Breast epithelium (tissue), 4 donors: ENCODE measurements at regions of chr5 and their contacts with region 1.

Region 1: DNA sequence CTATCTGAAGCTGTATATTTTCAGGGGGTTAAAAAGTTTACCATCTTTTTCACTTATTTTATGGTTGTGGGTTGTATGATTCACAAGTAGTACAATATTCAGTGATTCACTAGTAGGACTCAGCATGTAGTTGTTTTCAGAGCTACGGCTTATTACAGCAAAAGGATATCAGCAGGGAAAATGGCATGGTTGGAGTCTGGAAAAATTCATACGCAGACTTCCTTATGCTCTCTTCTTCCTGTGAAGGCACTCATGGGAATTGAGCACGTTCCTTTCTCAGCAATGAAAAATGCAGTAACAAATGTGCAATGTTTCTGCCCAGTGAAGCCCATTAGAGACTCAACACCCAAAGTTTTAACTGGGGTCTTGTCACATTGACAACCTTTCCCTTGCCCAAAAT is 250.5 kb downstream of the KCNN2 start:
- DNase-seq: no peak
- H3K4me3 ChIP-seq: no peak overlapping the region
- H3K27ac ChIP-seq: no peak overlapping the region
- H3K4me1 ChIP-seq: no peaks in the 10 kb centered on the region
- H3K27me3 ChIP-seq: no peaks in the 10 kb centered on the region
- CTCF ChIP-seq: no peak
- POLR2A ChIP-seq: no peak

Region 2: GRCh38 chr5:114658194-114658593 is 45.8 kb after region 1 on chr5:
- intact Hi-C with region 1: no loop called
- DNase-seq: no peak
- H3K4me3 ChIP-seq: no peak overlapping the region
- H3K27ac ChIP-seq: no peak overlapping the region
- H3K4me1 ChIP-seq: no peaks in the 10 kb centered on the region
- H3K27me3 ChIP-seq: no peaks in the 10 kb centered on the region
- CTCF ChIP-seq: no peak
- POLR2A ChIP-seq: no peak

Region 3: DNA sequence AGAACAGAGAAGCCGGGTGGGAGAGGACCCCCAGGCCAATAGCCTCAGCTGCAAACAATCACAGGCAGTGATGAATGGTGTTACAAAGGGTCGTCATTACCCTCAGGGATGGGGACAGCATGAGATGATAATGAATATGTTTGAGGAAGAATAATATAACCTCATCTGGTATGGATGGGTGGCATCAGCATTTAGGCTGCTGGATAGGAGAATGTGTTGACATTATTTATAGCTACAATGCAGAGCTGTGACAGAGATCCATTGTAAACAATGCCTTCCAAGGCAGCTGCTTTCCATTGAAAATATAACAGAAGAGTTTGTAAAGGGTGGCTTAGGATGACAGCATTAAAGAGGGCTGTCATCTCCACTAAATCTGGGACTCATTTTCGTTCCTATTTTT is 115.0 kb after region 1 on chr5:
- intact Hi-C with region 1: loop called (anchors 5 kb)
- DNase-seq: no peak
- H3K4me3 ChIP-seq: no peak overlapping the region
- H3K27ac ChIP-seq: no peak overlapping the region
- H3K4me1 ChIP-seq: no peaks in the 10 kb centered on the region
- H3K27me3 ChIP-seq: no peaks in the 10 kb centered on the region
- CTCF ChIP-seq: no peak
- POLR2A ChIP-seq: no peak